CD4-positive, alpha-beta T cell (primary cell): ENCODE measurements at regions of chr2 and their contacts with region 1.

Region 1: DNA sequence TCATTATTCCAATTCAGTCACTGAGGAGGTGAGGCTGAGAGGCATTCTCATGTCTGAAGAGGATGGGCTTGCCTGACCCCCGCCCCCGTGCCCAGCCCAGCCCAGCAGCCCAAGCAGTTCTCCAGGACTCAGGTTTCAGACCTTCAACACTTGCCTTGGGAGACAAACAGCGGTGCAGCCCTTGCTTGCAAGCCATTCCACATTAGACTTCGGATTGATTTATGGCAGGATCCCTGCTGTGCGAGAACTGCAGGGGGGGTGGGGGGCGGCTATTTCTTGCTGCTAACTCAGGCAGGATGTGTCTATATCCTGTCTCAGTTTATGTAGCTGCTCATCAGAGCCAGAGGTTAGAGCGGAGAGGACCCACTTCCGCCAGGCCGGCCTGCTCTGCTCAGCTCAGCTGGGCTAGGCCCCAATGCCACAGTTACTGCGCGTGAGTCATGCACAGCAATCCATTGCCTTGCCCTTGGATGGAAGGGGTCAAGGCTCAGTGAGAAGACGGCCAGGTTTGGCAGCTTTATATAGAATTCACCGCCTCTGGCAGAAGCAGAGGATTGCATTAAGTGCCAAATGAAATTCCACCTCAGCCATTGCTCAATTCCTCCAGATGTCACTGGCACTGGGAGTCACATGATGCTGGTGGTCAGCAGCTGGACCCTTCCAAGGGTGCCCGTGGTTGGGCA is 1.8 kb downstream of the GYPC start:
- DNase-seq: peak; percentile 50 to 90 (median 74)
- ATAC-seq: peak; percentile 59
- H3K4me3 ChIP-seq: peak overlapping the region; percentile 86
- H3K4me3 Mint-ChIP-seq: peak overlapping the region; percentile 100
- H3K27ac ChIP-seq: peak overlapping the region; percentile 80 to 81
- H3K27ac Mint-ChIP-seq: peak overlapping the region; percentile 98
- H3K4me1 ChIP-seq: peaks cover 66% of the 10 kb centered on the region
- H3K4me1 Mint-ChIP-seq: peaks cover 78% of the 10 kb centered on the region
- H3K27me3 ChIP-seq: no peaks in the 10 kb centered on the region
- H3K27me3 Mint-ChIP-seq: no peaks in the 10 kb centered on the region
- CTCF ChIP-seq: no peak

Region 2: DNA sequence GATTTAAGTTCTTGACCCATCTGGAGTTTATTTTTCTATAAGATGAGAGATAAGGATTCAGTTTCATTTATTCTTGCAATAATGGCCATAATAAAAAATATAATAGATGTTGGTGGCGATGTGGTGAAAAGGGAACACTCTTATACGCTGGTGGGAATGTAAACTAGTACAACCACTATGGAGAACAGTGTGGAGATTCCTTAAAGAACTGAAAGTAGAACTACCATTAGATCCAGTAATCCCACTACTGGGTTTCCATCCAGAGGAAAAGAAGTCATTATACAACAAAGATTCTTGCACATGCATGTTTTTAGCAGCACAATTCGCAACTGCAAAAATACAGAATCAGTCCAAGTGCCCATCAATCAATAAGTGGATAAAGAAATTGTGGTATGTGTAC is 1042.3 kb before region 1 on chr2:
- CTCF ChIA-PET with region 1: no interaction called
- POLR2A ChIA-PET with region 1: no interaction called
- intact Hi-C with region 1: no loop called
- DNase-seq: no peak
- ATAC-seq: no peak
- H3K4me3 ChIP-seq: no peak overlapping the region
- H3K4me3 Mint-ChIP-seq: no peak overlapping the region
- H3K27ac ChIP-seq: no peak overlapping the region
- H3K27ac Mint-ChIP-seq: no peak overlapping the region
- H3K4me1 ChIP-seq: no peaks in the 10 kb centered on the region
- H3K4me1 Mint-ChIP-seq: no peaks in the 10 kb centered on the region
- H3K27me3 ChIP-seq: no peaks in the 10 kb centered on the region
- H3K27me3 Mint-ChIP-seq: no peaks in the 10 kb centered on the region
- CTCF ChIP-seq: no peak

Region 3: GRCh38 chr2:126315828-126316227 is 341.9 kb before region 1 on chr2:
- CTCF ChIA-PET with region 1: no interaction called
- POLR2A ChIA-PET with region 1: no interaction called
- intact Hi-C with region 1: no loop called
- DNase-seq: no peak
- ATAC-seq: no peak
- H3K4me3 ChIP-seq: no peak overlapping the region
- H3K4me3 Mint-ChIP-seq: no peak overlapping the region
- H3K27ac ChIP-seq: no peak overlapping the region
- H3K27ac Mint-ChIP-seq: no peak overlapping the region
- H3K4me1 ChIP-seq: no peaks in the 10 kb centered on the region
- H3K4me1 Mint-ChIP-seq: no peaks in the 10 kb centered on the region
- H3K27me3 ChIP-seq: no peaks in the 10 kb centered on the region
- H3K27me3 Mint-ChIP-seq: no peaks in the 10 kb centered on the region
- CTCF ChIP-seq: no peak

Region 4: GRCh38 chr2:126761981-126762878 is 104.5 kb after region 1 on chr2:
- CTCF ChIA-PET with region 1: no interaction called
- POLR2A ChIA-PET with region 1: interaction called, 16 read pairs
- intact Hi-C with region 1: loop called in 1 of 2 experiments (anchors 1 kb)
- DNase-seq: peak in 12 of 14 experiments; percentile 21 to 79 (median 46)
- ATAC-seq: peak; percentile 94
- H3K4me3 ChIP-seq: peak overlapping the region; percentile 20
- H3K4me3 Mint-ChIP-seq: peak overlapping the region; percentile 73
- H3K27ac ChIP-seq: peak overlapping the region; percentile 60 to 61
- H3K27ac Mint-ChIP-seq: peak overlapping the region; percentile 87
- H3K4me1 ChIP-seq: peaks cover 45% of the 10 kb centered on the region
- H3K4me1 Mint-ChIP-seq: peaks cover 81% of the 10 kb centered on the region
- H3K27me3 ChIP-seq: no peaks in the 10 kb centered on the region
- H3K27me3 Mint-ChIP-seq: no peaks in the 10 kb centered on the region
- CTCF ChIP-seq: no peak

Region 5: DNA sequence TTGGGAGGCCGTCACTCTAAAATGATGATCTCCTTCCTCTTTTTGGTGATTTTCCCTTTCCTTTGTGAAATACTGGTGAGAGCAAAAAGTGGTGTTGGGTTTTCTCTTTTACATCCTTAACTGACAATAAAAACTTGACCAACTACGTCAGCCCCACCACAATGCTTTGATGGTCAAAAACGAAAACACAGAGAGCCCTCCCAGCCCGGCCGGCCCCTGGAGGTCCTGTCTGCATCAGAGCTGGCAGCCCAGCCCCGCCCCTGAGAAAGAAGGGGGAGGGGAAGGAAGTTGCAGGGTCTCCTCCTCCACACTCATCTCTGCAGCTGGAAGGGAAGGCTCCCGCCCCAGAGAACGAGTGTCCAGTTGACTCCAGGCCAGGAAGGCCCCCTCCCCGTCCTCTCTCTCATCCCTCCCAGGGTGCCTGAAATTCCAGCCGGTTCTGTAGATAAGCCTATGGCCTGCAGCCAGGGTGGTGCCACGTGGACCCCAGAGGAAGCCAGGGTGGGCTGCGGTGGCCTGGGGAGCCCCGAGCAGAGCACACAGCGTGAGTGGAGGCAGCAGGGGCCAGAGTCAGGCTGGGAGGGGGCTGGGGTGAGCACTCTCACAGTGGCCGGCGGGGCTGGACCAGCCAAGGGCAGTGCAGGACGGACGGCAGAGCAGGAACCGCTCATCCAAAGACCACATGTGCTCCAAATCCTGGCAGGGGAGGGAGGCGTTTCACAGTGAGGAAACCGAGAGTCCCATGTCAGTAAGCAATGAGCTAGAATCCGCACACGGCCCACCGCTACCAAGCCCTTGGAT is 429.4 kb after region 1 on chr2:
- CTCF ChIA-PET with region 1: no interaction called
- POLR2A ChIA-PET with region 1: no interaction called
- intact Hi-C with region 1: loop called (anchors 5 to 10 kb)
- DNase-seq: peak in 1 of 14 experiments; percentile 34
- ATAC-seq: no peak
- H3K4me3 ChIP-seq: no peak overlapping the region
- H3K4me3 Mint-ChIP-seq: no peak overlapping the region
- H3K27ac ChIP-seq: no peak overlapping the region
- H3K27ac Mint-ChIP-seq: peak overlapping the region; percentile 99
- H3K4me1 ChIP-seq: peaks cover 46% of the 10 kb centered on the region
- H3K4me1 Mint-ChIP-seq: peaks cover 38% of the 10 kb centered on the region
- H3K27me3 ChIP-seq: no peaks in the 10 kb centered on the region
- H3K27me3 Mint-ChIP-seq: no peaks in the 10 kb centered on the region
- CTCF ChIP-seq: no peak